Activated CD4-positive, alpha-beta T cell treated with anti-CD3 and anti-CD28 coated beads for 36 hours (primary cell): ENCODE measurements at regions of chr21 and their contacts with region 1.

Region 1: DNA sequence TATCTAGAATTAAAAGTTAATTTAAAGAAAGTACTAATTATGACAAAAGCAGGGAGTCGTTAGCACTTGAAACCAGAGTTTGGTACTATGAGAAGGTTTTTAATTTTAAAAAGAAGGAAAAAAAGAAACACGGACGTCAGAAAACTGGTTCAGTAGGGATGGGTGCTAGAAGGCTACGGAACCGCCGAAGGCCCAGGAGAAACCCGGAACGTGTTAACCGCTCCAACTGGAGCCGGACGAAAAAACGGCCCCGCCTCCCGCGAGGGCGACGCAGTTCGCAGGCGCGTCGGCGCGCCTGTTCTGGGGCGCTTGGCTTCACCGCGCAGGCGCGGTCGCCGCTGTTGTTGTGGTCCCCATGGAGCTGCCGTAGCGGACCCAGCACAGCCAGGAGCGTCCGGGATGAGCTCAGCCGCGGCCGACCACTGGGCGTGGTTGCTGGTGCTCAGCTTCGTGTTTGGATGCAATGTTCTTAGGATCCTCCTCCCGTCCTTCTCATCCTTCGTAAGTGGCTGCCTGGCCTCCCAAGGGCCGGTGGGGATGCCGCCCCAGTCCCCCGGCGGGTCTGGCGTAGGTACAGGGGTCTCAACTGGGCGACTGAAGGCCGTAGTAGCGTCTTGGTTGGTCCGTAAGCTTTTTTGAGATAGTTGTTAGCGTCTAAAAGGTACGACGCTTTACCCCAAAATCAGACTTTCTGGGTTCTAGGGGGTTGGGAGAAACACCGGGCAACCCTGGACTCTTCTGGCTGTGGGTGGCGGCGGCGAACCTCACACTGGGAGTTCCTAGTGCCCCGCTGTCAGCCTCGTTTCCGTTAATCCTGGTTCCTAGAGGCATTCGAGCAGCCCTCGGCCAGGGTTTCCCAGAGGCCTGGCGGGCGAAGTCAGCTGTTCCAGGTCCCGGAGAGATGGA is 31.4 kb upstream of the HMGN1 start:
- DNase-seq: peak; percentile 96
- ATAC-seq: peak; percentile 98
- H3K4me3 Mint-ChIP-seq: peak overlapping the region; percentile 84
- H3K27ac Mint-ChIP-seq: peak overlapping the region; percentile 64
- H3K4me1 Mint-ChIP-seq: peaks cover 23% of the 10 kb centered on the region
- H3K27me3 Mint-ChIP-seq: no peaks in the 10 kb centered on the region

Region 2: DNA sequence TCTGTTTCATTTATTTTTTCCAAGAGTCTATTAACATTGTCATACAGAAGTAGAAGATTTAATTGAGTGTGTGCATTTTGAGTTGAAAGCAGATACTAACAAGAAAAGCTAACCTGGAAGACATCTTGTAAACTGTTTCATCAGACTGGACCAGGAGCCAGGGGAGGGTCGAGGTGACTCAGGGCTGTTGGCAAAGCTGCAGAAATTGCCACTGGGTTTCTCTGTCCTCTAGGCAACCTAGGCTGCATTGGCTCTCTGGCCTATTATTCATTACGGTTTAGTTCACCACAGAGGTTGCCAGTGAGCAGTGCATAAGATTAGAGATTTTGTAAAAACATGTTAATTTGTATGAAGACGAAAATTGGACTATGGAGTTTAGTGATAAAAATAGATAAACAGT is 909.5 kb before region 1 on chr21:
- CTCF ChIA-PET with region 1: no interaction called
- POLR2A ChIA-PET with region 1: no interaction called
- intact Hi-C with region 1: no loop called
- DNase-seq: no peak
- ATAC-seq: no peak
- H3K4me3 Mint-ChIP-seq: no peak overlapping the region
- H3K27ac Mint-ChIP-seq: no peak overlapping the region
- H3K4me1 Mint-ChIP-seq: no peaks in the 10 kb centered on the region
- H3K27me3 Mint-ChIP-seq: peaks cover 32% of the 10 kb centered on the region

Region 3: GRCh38 chr21:39349211-39350093 is 30.8 kb before region 1 on chr21:
- CTCF ChIA-PET with region 1: interaction called, 3 read pairs
- POLR2A ChIA-PET with region 1: interaction called, 4 read pairs
- intact Hi-C with region 1: loop called (anchors 1 kb)
- DNase-seq: peak; percentile 99
- ATAC-seq: peak; percentile 89
- H3K4me3 Mint-ChIP-seq: peak overlapping the region; percentile 92
- H3K27ac Mint-ChIP-seq: peak overlapping the region; percentile 100
- H3K4me1 Mint-ChIP-seq: peaks cover 33% of the 10 kb centered on the region
- H3K27me3 Mint-ChIP-seq: no peaks in the 10 kb centered on the region